Endothelial cell of umbilical vein (primary cell): ENCODE measurements at regions of chr12 and their contacts with region 1.

Region 1: DNA sequence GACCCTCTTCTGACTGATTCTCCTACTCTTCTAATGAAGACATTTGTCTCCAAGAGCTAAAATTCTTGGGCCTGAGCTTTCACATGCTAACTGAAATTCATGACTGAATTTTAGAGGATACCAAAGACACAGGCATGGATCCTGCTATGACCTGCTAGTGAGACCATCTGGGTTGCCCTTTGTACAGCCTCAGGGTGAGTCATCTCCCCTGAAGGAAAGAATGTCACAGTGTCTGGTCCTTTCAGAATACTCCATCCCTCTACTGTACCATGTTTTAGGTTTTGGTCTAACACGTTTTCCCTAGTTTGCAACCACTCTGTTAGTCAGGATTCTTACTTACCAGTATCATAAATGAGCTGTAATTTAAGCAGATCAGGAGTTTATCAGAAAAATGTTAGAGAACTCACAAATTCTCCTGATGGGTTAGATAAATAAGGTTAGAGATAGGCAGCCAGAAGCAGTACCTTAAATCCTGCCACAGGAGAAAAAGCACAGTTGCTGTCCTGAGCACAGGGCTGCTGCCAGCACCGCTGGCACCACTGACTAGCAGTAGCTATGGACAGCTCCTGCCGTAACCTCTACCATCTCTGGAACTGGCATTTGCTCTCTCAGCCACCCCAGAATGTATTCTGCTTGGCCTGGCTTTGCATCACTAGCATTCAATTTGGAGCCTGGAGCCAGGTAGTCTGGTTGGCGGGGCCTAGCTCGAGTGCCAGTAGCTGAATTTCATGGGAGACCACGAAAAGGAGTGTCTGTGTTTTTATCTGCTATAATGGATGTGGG is 127.6 kb downstream of the ANO6 start:
- DNase-seq: no peak
- H3K4me3 ChIP-seq: no peak overlapping the region
- H3K27ac ChIP-seq: no peak overlapping the region
- H3K4me1 ChIP-seq: peaks cover 6% of the 10 kb centered on the region
- H3K27me3 ChIP-seq: no peaks in the 10 kb centered on the region
- CTCF ChIP-seq: no peak
- POLR2A ChIP-seq: no peak

Region 2: DNA sequence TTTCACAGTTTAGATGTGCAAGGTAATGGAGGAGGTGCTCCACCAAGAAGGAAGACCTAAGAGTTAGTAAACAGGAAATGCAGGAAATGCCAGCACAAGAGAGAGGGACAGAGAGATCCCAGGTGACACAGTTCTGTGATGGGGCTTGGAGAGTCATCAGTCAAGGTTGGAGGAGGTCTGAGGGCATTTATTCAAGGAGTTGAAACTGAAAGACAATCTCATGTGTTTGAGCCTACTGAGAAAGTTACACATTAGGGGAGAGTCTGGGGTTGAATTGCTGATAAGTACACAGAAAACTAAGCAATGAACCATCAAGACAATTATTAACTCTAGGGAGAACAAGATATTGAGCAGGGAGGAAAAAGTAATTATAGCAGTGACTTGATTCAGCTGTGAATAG is 10.9 kb after region 1 on chr12:
- CTCF ChIA-PET with region 1: interaction called, 10 read pairs
- POLR2A ChIA-PET with region 1: no interaction called
- dilution Hi-C with region 1: no loop called
- intact Hi-C with region 1: no loop called
- DNase-seq: no peak
- H3K4me3 ChIP-seq: no peak overlapping the region
- H3K27ac ChIP-seq: no peak overlapping the region
- H3K4me1 ChIP-seq: peaks cover 19% of the 10 kb centered on the region
- H3K27me3 ChIP-seq: no peaks in the 10 kb centered on the region
- CTCF ChIP-seq: no peak
- POLR2A ChIP-seq: no peak